Right lobe of liver (tissue), 6 donors: ENCODE measurements at regions of chr7 and their contacts with region 1.

Region 1: DNA sequence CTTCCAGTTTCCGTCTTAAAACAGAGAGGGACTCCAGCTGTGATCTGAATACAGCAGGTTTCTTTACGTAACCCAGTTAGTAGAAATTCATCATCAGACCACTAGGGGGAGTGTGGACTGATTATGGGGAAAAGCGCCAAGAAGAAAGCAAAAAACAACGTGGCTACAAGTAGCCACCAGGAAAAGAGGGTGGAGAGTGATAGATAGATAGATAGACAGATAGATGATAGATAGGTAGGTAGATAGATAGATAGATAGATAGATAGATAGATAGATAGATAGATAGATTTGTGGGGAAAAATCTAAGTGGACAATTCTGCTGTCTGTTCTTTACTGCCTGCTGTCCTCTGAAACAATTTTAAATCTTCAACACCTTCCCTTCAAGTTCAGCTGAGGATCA is 12.7 kb upstream of the AKR1B10 start:
- DNase-seq: no peak
- ATAC-seq: peak; percentile 71 to 87 (median 84)
- H3K4me3 ChIP-seq: no peak overlapping the region
- H3K27ac ChIP-seq: no peak overlapping the region
- H3K4me1 ChIP-seq: peaks cover 0 to 6% (median 0%) of the 10 kb centered on the region in 4 donors
- H3K27me3 ChIP-seq: no peaks in the 10 kb centered on the region
- CTCF ChIP-seq: peak; percentile 78 to 88 (median 80)
- POLR2A ChIP-seq: no peak

Region 2: DNA sequence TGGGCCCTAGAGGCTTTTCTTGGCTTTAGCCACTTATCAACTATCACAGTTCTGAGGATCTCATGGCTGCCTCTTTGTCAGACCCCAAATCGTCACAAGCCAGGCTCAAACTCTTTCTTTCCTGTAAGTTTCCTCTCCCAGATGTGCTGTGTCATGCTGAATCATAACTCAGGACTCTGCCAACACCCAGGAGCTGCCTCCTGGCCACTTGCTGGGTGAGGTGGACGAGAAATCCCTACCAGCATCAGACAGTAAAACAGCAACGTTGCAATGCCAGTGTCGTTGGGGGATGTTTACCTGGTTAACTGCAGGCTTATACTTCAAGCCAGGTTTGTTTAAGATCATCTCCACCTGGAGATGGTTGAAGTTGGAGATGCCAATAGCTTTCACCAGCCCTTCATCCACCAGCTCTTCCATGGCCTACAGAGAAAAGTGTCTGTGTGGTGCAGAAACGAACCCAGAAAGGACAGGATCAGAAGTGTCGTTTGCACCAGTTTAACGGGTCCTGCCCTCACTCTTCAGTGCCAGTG is 65.9 kb before region 1 on chr7:
- intact Hi-C with region 1: loop called (anchors 10 kb)
- DNase-seq: no peak
- ATAC-seq: no peak
- H3K4me3 ChIP-seq: no peak overlapping the region
- H3K27ac ChIP-seq: no peak overlapping the region
- H3K4me1 ChIP-seq: peaks cover 0 to 2% (median 0%) of the 10 kb centered on the region in 4 donors
- H3K27me3 ChIP-seq: no peaks in the 10 kb centered on the region
- CTCF ChIP-seq: no peak
- POLR2A ChIP-seq: no peak

Region 3: DNA sequence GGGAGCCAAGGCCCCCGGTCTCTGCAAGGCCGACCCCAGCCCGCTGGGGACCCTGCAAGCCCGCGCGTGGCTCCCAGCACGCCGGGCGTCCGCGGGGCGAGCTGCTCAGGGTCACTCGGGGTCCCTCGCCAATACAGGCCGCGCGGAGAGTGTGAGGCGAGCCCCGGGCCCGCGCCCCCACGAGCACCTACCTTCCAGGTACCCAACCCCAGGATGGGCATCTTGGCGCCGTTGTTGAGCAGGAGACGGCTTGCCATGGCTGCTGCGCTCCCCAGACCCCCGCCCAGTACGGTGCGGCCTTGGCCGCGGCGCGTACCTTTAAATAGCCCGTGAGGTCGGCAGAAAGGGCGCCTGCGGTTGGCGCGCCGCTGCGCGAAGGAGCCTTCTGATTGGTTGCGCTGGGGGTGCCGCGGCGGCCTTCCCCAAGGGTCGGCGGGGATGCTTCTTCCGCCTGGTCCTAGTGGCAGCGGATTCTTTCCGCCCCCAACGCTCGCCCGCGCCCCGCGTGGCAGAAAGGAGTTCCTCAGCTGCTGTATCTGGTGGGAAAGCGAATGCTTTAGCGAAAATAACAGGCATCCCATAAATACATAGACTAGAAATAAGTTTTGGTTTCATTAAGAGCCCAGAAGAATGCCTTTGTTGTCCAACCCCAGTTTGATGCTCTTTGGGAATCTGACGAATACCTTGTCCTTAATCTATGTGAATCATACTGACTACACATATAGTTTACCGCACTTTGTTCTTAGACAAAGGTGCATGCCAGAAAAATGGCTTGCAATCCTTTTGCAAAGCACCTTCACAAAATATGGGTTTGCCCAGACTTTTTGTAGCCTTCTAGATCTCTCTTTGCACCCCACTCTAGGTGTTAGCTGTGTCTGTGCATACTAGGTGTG is 55.6 kb before region 1 on chr7 and contains the start of gene AKR1B1:
- intact Hi-C with region 1: loop called in 1 of 2 experiments (anchors 10 kb)
- DNase-seq: peak; percentile 74 to 79 (median 78)
- ATAC-seq: peak; percentile 87 to 92 (median 90)
- H3K4me3 ChIP-seq: peak within 1 kb of the TSS; percentile 52 to 59 (median 58)
- H3K27ac ChIP-seq: peak within 1 kb of the TSS; percentile 35 to 76 (median 37)
- H3K4me1 ChIP-seq: peaks cover 0 to 11% (median 0%) of the 10 kb centered on the region in 4 donors
- H3K27me3 ChIP-seq: peaks cover 0 to 5% of the 10 kb centered on the region in 2 donors
- CTCF ChIP-seq: peak; percentile 24 to 34 (median 30)
- POLR2A ChIP-seq: peak; percentile 46
- total RNA-seq, gene AKR1B1: 6.9 to 18.1 (median 9.7) TPM

Region 4: GRCh38 chr7:134605973-134606923 is 91.6 kb after region 1 on chr7:
- intact Hi-C with region 1: loop called (anchors 10 kb)
- DNase-seq: peak; percentile 45 to 63 (median 59)
- ATAC-seq: peak; percentile 86 to 91 (median 88)
- H3K4me3 ChIP-seq: no peak overlapping the region
- H3K27ac ChIP-seq: peak overlapping the region in 1 of 3 donors; percentile 19
- H3K4me1 ChIP-seq: peaks cover 0 to 10% (median 0%) of the 10 kb centered on the region in 4 donors
- H3K27me3 ChIP-seq: no peaks in the 10 kb centered on the region
- CTCF ChIP-seq: peak; percentile 78 to 96 (median 90)
- POLR2A ChIP-seq: no peak